Panc1 (cell line): ENCODE measurements at regions of chr22 and their contacts with region 1.

Region 1: GRCh38 chr22:43014869-43015676 is at the start of gene PACSIN2:
- DNase-seq: peak; percentile 59
- ATAC-seq: peak; percentile 98
- H3K4me3 ChIP-seq: peak within 1 kb of the TSS; percentile 59 to 76
- H3K27ac ChIP-seq: peak within 1 kb of the TSS; percentile 85
- H3K4me1 ChIP-seq: peaks cover 21% of the 10 kb centered on the region
- H3K27me3 ChIP-seq: no peaks in the 10 kb centered on the region
- CTCF ChIP-seq: no peak
- total RNA-seq, gene PACSIN2: 60.2 TPM

Region 2: GRCh38 chr22:42856179-42856864 is 158.8 kb before region 1 on chr22:
- CTCF ChIA-PET with region 1: interaction called, 10 read pairs
- POLR2A ChIA-PET with region 1: no interaction called
- in situ Hi-C with region 1: no loop called
- intact Hi-C with region 1: no loop called
- DNase-seq: no peak
- ATAC-seq: peak; percentile 47
- H3K4me3 ChIP-seq: peak overlapping the region; percentile 73 to 87
- H3K27ac ChIP-seq: peak overlapping the region; percentile 82
- H3K4me1 ChIP-seq: peaks cover 6% of the 10 kb centered on the region
- H3K27me3 ChIP-seq: no peaks in the 10 kb centered on the region
- CTCF ChIP-seq: no peak

Region 3: DNA sequence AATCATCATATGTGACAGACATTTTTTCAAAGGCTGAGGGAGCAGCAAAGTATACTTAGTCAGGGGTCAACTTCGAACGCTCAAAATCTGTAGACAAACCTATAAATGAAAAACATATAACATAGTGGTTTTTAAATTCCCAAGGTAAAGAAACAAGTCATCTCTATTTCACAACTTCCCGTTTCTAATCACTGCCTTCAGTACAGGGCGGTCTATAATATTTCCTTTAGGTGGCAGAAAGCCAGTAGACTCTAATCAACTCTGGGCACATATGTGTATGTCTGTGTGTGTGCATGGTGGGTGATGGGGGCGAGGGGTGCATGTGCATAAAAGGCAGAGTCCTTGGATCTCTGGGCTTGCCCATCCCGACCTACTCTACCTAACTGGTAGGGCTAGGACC is 103.0 kb before region 1 on chr22:
- CTCF ChIA-PET with region 1: no interaction called
- POLR2A ChIA-PET with region 1: no interaction called
- in situ Hi-C with region 1: no loop called
- intact Hi-C with region 1: no loop called
- DNase-seq: no peak
- ATAC-seq: no peak
- H3K4me3 ChIP-seq: no peak overlapping the region
- H3K27ac ChIP-seq: no peak overlapping the region
- H3K4me1 ChIP-seq: no peaks in the 10 kb centered on the region; the same call in none of the 2 replicates
- H3K27me3 ChIP-seq: no peaks in the 10 kb centered on the region
- CTCF ChIP-seq: no peak

Region 4: DNA sequence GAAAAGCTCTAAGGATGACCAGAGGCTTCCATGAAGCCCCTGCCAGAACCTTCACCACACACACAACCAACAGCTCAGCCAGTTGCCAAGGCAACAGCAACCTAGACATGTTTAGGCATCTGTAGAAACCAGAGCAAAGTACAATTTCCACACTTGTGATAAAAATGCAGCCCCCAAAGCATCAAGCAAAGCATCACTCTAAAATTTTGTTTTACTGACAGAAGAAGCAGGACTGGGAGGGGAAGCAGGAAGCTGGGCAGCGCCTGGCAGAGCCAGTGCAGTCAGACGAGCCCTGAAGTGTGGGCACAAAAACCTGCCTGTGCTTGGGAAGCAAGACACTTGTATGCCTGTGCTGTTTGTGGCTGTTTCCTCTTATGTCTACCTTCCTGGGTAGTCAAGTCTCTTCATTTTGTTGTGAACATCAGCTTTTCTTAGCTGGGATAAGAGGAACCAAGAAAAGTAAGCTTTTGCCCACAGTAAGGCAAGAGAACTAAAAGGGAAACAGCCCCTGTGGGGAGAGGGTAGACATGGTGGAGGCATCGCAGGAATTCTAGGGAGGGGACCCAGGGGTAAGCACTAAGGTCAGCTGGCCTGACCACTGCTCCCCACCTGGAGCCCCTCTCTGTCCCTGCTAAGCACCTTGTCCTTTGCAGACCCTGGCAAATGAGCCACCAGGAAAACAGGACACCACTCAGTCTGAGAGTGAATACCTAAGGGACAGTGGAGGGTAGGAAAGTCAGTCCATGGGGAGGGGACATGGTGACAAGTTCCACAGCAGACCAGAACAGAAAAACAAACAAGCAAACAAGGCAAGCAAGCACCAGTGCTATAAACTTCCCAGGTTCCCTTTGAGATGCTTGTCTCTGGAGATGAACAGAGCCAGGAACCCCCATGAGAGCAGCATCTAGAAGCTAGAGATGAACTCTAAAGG is 13.5 kb before region 1 on chr22:
- CTCF ChIA-PET with region 1: no interaction called
- POLR2A ChIA-PET with region 1: interaction called, 10 read pairs
- in situ Hi-C with region 1: no loop called
- intact Hi-C with region 1: no loop called
- DNase-seq: no peak
- ATAC-seq: 0 out of 2 replicates have a peak, but pooled peaks have one; percentile 38
- H3K4me3 ChIP-seq: no peak overlapping the region
- H3K27ac ChIP-seq: no peak overlapping the region
- H3K4me1 ChIP-seq: peaks cover 33% of the 10 kb centered on the region
- H3K27me3 ChIP-seq: no peaks in the 10 kb centered on the region
- CTCF ChIP-seq: no peak